CD4-positive, alpha-beta T cell (primary cell): ENCODE measurements at regions of chr10 and their contacts with region 1.

Region 1: DNA sequence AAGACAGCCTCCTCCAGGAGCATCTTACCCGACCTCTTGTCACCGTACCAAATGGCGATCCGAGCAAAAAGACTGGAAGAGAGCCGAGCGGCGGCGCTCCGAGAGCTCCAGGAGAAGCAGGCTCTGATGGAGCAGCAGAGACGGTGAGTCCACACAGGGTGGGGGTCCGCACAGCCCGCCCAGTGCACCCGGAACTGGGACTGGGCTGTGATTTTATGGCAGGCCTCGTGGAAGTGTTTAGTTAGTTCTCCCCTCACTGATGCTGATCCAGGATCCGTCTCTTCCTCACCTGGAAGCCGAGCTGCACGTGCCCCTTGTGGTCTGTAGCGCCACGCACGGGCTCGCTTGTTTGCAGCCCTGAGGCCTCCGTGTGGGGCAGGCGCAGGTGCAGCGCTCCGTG is 19.6 kb downstream of the LRRC27 start:
- DNase-seq: no peak
- ATAC-seq: no peak
- H3K4me3 ChIP-seq: no peak overlapping the region
- H3K4me3 Mint-ChIP-seq: no peak overlapping the region
- H3K27ac ChIP-seq: no peak overlapping the region
- H3K27ac Mint-ChIP-seq: no peak overlapping the region
- H3K4me1 ChIP-seq: peaks cover 5% of the 10 kb centered on the region
- H3K4me1 Mint-ChIP-seq: no peaks in the 10 kb centered on the region
- H3K27me3 ChIP-seq: no peaks in the 10 kb centered on the region
- H3K27me3 Mint-ChIP-seq: no peaks in the 10 kb centered on the region
- CTCF ChIP-seq: no peak

Region 2: DNA sequence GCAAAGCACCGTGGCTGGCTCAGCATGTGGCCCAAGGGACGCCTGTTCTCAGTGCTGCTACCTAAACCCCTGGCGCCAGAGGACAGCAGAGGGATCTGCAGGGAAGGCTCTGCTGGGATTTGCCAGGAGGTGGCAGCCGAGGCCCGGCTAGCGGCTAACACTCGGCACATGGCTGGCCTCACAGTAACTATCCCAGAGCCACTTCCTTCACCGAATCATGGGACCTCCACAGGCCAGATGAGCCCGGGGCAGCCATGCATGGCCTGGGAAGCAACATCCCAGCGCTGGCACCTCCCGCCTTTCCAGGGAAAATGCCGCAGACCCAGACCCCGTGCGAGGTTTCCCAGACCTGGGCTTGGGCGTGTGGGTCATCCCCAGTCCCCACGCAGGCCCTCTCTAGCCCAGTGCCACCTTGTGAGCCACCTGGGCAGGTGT is 128.4 kb before region 1 on chr10:
- CTCF ChIA-PET with region 1: no interaction called
- POLR2A ChIA-PET with region 1: no interaction called
- intact Hi-C with region 1: loop called (anchors 1 kb)
- DNase-seq: peak; percentile 44 to 81 (median 58)
- ATAC-seq: peak; percentile 96
- H3K4me3 ChIP-seq: no peak overlapping the region
- H3K4me3 Mint-ChIP-seq: no peak overlapping the region
- H3K27ac ChIP-seq: no peak overlapping the region
- H3K27ac Mint-ChIP-seq: no peak overlapping the region
- H3K4me1 ChIP-seq: peaks cover 10% of the 10 kb centered on the region
- H3K4me1 Mint-ChIP-seq: peaks cover 4% of the 10 kb centered on the region
- H3K27me3 ChIP-seq: no peaks in the 10 kb centered on the region
- H3K27me3 Mint-ChIP-seq: no peaks in the 10 kb centered on the region
- CTCF ChIP-seq: peak; percentile 69

Region 3: DNA sequence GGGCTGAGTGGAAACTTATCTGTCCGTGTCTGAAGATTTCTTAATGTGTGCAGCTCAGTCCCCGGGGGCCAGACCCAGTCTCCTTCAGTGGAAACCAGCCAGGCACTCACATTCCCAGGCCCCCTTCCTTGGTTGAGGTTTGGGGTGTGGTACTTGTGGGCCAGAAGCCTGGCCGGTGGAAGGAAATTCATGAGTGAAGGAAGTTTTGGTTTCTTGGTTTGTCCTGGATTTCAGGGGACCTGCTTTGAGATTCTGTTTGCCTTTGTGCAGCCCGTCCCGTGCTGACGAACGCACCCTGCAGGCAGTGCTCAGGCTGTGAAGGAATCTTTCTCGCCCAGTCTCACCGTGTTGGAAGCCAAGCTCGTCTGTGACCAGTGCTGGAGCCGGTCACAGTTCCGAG is 188.8 kb after region 1 on chr10:
- CTCF ChIA-PET with region 1: no interaction called
- POLR2A ChIA-PET with region 1: no interaction called
- intact Hi-C with region 1: no loop called
- DNase-seq: peak in 2 of 14 experiments; percentile 26 to 28
- ATAC-seq: no peak
- H3K4me3 ChIP-seq: no peak overlapping the region
- H3K4me3 Mint-ChIP-seq: peak overlapping the region; percentile 77
- H3K27ac ChIP-seq: peak overlapping the region; percentile 36 to 40
- H3K27ac Mint-ChIP-seq: peak overlapping the region; percentile 85
- H3K4me1 ChIP-seq: peaks cover 87% of the 10 kb centered on the region
- H3K4me1 Mint-ChIP-seq: peaks cover 74% of the 10 kb centered on the region
- H3K27me3 ChIP-seq: no peaks in the 10 kb centered on the region
- H3K27me3 Mint-ChIP-seq: no peaks in the 10 kb centered on the region
- CTCF ChIP-seq: no peak